ENCODE measurements at regions of chr3 and their contacts with region 1.

Region 1: GRCh38 chr3:43455233-43455632 is 166.6 kb downstream of the ANO10 start:
- DNase-seq: peak; percentile 35
- H3K4me3 ChIP-seq: no peak overlapping the region
- H3K27ac ChIP-seq: no peak overlapping the region
- H3K4me1 ChIP-seq: peaks cover 4% of the 10 kb centered on the region
- H3K27me3 ChIP-seq: no peaks in the 10 kb centered on the region
- CTCF ChIP-seq: no peak
- POLR2A ChIP-seq: no peak

Region 2: DNA sequence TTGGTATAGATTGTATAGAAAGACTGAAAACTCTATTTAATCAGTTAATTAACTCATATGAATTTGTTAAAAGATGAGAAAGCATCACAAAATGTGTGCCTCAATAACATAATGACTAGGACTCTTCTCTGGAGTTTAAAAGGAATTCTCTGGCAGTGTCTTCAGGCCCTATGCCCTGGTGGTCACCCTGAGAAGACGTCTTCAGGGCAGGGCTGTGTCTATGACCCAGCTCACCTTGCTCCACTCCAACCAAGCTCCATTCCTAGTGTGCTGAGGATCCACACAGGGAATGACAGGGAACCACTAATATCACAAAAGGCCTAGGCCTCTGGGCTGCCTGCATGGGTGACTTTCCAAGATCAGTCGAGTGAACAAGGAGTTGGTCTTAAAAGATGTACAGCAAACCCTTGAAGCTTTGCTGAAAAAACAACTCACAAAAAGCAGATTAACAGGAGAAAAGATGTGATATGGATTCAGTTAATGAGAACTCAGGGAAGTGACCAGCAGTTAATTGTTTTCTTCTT is 12.3 kb before region 1 on chr3:
- CTCF ChIA-PET with region 1: interaction called, 14 read pairs
- POLR2A ChIA-PET with region 1: no interaction called
- dilution Hi-C with region 1: no loop called
- intact Hi-C with region 1: no loop called
- DNase-seq: no peak
- H3K4me3 ChIP-seq: no peak overlapping the region
- H3K27ac ChIP-seq: no peak overlapping the region
- H3K4me1 ChIP-seq: no peaks in the 10 kb centered on the region
- H3K27me3 ChIP-seq: no peaks in the 10 kb centered on the region
- CTCF ChIP-seq: no peak
- POLR2A ChIP-seq: no peak

Region 3: GRCh38 chr3:43629257-43629656 is 174.0 kb after region 1 on chr3:
- CTCF ChIA-PET with region 1: no interaction called
- POLR2A ChIA-PET with region 1: no interaction called
- dilution Hi-C with region 1: no loop called
- intact Hi-C with region 1: no loop called
- DNase-seq: no peak
- H3K4me3 ChIP-seq: no peak overlapping the region
- H3K27ac ChIP-seq: no peak overlapping the region
- H3K4me1 ChIP-seq: peaks cover 13% of the 10 kb centered on the region
- H3K27me3 ChIP-seq: no peaks in the 10 kb centered on the region
- CTCF ChIP-seq: no peak
- POLR2A ChIP-seq: no peak

Measured in endothelial cell of umbilical vein (primary cell).